K562 (cell line): ENCODE measurements at regions of chr13 and their contacts with region 1.

Region 1: DNA sequence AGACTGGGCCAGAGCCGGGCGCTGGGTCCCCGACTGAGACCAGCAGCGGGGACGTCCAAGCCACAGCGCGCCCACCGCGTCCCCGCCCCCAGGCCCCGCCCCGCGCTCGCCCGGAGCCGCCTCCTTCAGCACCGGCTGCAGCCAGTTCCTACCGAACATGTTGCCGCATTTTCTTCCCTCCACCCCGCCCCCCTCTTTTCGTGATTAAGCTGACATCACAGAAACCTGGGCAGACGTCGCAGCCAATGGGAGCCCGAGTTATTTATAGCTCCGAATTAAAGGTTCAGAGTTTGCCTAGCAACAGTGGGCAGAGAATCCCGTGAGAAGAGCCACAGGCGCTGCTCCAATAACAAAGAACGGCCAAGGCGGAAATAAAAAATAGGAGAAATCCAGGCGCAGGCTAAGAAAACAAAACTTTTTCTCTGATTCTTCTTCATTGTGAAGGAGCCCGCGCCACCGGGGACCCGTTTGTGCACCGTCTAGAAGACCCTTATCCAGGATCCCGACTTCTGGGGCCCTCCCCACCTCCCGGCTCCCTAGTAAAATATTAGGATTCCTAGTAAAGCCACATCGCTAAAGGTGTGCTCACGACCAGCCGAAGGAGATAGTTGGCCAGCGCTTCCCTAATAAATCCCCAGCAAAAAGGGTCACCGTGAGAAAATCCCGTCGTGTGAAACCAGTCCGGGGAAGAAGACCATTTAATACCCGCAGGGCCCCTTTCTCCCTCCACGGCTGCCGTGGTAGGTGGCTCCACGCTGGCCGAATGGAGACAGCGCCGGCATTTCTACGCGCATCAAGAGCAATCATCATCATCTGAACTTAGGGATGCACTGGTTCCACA is 61.7 kb downstream of the SERP2 start:
- DNase-seq: peak; percentile 83 to 94 (median 88)
- ATAC-seq: peak; percentile 90
- H3K4me3 ChIP-seq: peak overlapping the region; percentile 55
- H3K27ac ChIP-seq: peak overlapping the region; percentile 90
- H3K4me1 ChIP-seq: peaks cover 7 to 8% of the 10 kb centered on the region in 2 experiments; a peak in 3 of 5 replicates
- H3K27me3 ChIP-seq: no peaks in the 10 kb centered on the region
- CTCF ChIP-seq: no peak
- EP300 ChIP-seq: peak; percentile 37; the same call in 1 of the 2 replicates
- POLR2A ChIP-seq: peak; percentile 43; the same call in 1 of the 2 replicates
- RAD21 ChIP-seq: no peak

Region 2: DNA sequence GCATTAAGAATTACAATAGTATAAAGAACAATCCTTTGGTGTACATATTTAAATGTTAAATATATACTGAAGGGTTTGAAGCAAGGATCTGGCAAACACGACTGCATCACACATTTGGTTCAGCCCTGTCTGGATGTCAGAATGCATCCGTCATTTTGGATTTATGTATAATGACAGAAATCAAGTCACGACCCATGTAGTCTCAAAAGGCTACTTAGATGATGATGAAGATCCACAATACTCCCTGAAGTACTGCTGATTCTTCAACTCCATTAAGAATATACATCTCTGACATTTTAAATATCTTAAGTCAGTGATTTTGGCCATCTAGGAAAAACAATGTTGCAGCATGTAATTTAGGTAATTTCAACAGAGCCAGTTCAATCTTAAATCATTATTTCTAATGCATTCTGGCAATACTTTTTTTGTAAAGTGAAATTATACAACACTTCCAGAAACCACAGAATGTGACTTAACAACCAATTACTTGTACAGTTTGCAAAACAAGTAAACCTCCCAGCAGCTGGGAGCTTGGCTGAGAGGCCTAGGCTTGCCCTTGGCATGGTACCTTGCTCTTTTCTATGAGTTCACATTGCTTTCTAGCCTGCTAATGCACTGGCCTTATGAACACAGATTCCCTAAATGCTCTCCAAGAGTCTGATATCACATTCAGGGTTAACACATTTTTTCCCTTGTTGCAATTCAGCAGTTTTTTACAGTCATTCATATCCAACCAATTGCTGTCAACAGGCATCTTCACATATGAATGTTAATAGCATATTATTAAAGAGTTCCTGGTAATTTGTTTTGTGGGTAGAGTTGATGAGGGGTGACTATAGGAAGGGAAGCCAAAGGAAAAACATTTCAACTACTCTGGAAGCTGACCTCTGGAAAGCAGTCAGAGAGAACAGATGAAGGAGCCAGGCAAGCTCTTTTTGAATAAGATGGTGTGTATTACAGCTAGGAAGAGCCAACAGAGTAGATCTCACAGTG is 823.8 kb before region 1 on chr13:
- CTCF ChIA-PET with region 1: no interaction called
- POLR2A ChIA-PET with region 1: no interaction called
- in situ Hi-C with region 1: no loop called
- intact Hi-C with region 1: no loop called
- DNase-seq: no peak
- ATAC-seq: no peak
- H3K4me3 ChIP-seq: no peak overlapping the region
- H3K27ac ChIP-seq: no peak overlapping the region
- H3K4me1 ChIP-seq: no peaks in the 10 kb centered on the region
- H3K27me3 ChIP-seq: no peaks in the 10 kb centered on the region
- CTCF ChIP-seq: no peak
- EP300 ChIP-seq: no peak
- POLR2A ChIP-seq: no peak
- RAD21 ChIP-seq: no peak

Region 3: DNA sequence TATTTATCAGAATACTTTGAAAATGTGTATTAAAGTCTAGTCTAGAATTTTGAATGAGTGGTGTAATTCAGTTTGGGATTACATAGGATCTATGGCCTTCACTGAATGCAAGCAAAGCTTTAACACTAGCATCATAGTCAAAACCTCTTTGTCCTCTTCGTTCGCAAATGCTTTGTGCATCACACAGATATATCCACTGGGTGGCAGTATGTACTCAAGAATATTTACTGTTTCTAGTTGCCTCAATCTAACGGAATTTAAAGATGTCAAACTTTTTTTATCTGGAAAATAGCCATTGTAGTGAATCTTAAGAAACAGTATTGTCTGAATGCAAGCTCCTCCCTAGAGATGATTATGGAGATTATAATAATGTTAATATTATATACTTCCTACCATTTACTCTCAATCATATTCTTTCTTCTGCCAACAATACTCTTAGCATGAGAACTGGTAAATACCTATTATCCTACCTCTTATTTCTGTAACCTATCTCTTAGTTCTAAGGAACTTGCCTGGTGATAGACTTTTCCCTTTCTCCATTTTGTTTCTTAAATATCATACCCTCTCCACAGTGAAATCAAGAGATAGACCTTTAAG is 529.8 kb before region 1 on chr13:
- CTCF ChIA-PET with region 1: interaction called, 12 read pairs
- POLR2A ChIA-PET with region 1: interaction called, 3 read pairs
- in situ Hi-C with region 1: no loop called
- intact Hi-C with region 1: loop called (anchors 2 kb)
- DNase-seq: peak; percentile 21 to 52 (median 24)
- ATAC-seq: peak; percentile 64; the same call in 2 of the 3 replicates
- H3K4me3 ChIP-seq: no peak overlapping the region
- H3K27ac ChIP-seq: no peak overlapping the region
- H3K4me1 ChIP-seq: no peaks in the 10 kb centered on the region
- H3K27me3 ChIP-seq: no peaks in the 10 kb centered on the region
- CTCF ChIP-seq: peak; percentile 43 to 68 (median 45); a peak in 5 of 6 replicates
- EP300 ChIP-seq: no peak
- POLR2A ChIP-seq: no peak
- RAD21 ChIP-seq: peak; percentile 72 to 81

Region 4: GRCh38 chr13:44191504-44192171 is 243.7 kb before region 1 on chr13:
- CTCF ChIA-PET with region 1: no interaction called
- POLR2A ChIA-PET with region 1: interaction called, 4 read pairs
- in situ Hi-C with region 1: no loop called
- intact Hi-C with region 1: loop called (anchors 1 kb)
- DNase-seq: peak; percentile 31 to 53 (median 44)
- ATAC-seq: peak; percentile 96
- H3K4me3 ChIP-seq: no peak overlapping the region
- H3K27ac ChIP-seq: no peak overlapping the region
- H3K4me1 ChIP-seq: no peaks in the 10 kb centered on the region
- H3K27me3 ChIP-seq: peaks cover 0 to 4% of the 10 kb centered on the region in 2 experiments; a peak in 1 of 5 replicates
- CTCF ChIP-seq: peak; percentile 61 to 69 (median 67)
- EP300 ChIP-seq: no peak
- POLR2A ChIP-seq: no peak
- RAD21 ChIP-seq: peak; percentile 55 to 62

Region 5: DNA sequence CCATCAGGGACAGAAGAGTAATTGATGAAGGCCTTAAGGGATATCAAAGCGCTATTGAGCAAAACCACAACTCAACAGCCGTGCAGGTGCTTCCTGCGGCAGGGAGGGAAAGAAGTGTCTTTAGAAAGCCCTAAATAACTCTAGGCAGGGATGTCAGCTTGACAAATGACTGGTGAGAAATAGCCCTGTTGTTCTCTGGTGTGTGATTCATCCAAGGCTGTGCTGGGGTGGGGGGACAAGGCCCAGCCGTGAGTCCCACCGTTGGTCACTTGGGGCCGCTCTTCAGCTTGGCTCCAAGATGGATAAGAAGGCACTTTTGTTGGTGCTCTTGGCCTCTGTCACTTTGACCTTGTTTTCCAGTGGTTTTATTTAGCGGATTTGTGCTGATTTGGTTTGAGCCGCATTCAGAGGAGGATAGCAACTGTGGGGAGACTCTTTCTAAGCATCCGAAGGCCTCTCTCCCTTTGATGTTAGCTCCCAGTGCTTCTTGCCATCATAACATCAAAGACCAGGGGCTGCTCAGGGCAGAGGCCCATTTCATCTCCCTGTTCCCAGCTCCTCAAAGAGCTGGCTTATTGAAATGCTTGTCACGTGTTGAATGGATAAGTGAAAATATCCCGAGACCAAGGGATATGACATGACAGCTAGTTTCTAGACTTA is 192.0 kb before region 1 on chr13:
- CTCF ChIA-PET with region 1: interaction called, 24 read pairs
- POLR2A ChIA-PET with region 1: interaction called, 4 read pairs
- in situ Hi-C with region 1: loop called (anchors 5 kb)
- intact Hi-C with region 1: loop called (anchors 1 kb)
- DNase-seq: peak; percentile 64 to 82 (median 70)
- ATAC-seq: peak; percentile 99
- H3K4me3 ChIP-seq: no peak overlapping the region
- H3K27ac ChIP-seq: no peak overlapping the region
- H3K4me1 ChIP-seq: peaks cover 0 to 11% of the 10 kb centered on the region in 2 experiments; a peak in 1 of 5 replicates
- H3K27me3 ChIP-seq: peaks cover 0 to 5% of the 10 kb centered on the region in 2 experiments; a peak in 1 of 5 replicates
- CTCF ChIP-seq: peak; percentile 78 to 82 (median 79)
- EP300 ChIP-seq: no peak
- POLR2A ChIP-seq: no peak
- RAD21 ChIP-seq: peak; percentile 89 to 91

Region 6: DNA sequence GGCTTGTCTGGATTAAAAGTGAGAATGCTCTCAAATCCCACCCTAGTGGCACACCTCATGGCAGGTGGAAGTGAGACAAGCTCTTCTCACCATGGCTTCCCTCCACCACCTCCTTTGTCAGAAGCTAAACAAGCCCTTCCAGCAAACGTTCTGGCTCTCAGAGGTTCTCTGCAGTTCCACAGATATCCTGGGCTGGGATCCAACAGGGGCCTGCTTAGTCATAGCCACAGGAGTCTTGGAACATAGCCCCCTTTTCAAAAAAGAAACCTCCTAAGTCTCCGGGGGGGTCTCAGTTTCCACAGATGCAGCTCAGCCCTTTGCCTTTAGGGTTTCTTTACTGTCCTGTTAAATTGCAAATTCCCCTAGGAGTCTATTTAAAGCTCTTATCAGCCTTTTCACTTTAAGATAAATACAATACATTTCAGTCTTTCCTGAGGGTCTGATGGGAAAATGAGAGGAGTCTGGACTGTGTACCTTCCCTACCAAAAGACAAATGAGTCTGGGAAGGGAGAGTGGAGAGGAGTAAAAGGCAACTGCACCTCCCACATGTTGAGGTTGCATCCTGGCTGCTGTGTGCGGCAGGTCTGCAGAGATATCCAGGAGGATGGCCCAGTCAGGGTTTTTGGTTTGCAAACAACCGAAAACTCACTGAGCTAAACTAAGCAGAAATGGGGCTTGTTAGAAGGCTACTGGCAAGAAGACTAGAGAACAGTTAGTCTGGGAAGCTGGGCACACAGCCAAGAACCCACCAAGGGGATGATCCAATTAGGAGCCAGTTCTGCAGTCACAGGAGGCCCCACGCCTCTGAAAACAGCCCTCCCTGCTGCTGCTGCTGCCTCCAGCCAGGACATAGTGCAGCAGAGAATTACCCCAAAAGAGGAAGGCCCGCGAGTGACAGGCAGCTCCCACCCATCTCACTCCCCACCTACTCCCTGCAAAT is 103.2 kb before region 1 on chr13:
- CTCF ChIA-PET with region 1: no interaction called
- POLR2A ChIA-PET with region 1: interaction called, 3 read pairs
- in situ Hi-C with region 1: no loop called
- intact Hi-C with region 1: loop called (anchors 10 kb)
- DNase-seq: peak in 1 of 4 experiments; percentile 12
- ATAC-seq: peak; percentile 29; the same call in 1 of the 3 replicates
- H3K4me3 ChIP-seq: no peak overlapping the region
- H3K27ac ChIP-seq: no peak overlapping the region
- H3K4me1 ChIP-seq: peaks cover 0 to 3% of the 10 kb centered on the region in 2 experiments; a peak in 2 of 5 replicates
- H3K27me3 ChIP-seq: peaks cover 0 to 8% of the 10 kb centered on the region in 2 experiments; a peak in 1 of 5 replicates
- CTCF ChIP-seq: no peak
- EP300 ChIP-seq: no peak
- POLR2A ChIP-seq: no peak
- RAD21 ChIP-seq: no peak

Region 7: DNA sequence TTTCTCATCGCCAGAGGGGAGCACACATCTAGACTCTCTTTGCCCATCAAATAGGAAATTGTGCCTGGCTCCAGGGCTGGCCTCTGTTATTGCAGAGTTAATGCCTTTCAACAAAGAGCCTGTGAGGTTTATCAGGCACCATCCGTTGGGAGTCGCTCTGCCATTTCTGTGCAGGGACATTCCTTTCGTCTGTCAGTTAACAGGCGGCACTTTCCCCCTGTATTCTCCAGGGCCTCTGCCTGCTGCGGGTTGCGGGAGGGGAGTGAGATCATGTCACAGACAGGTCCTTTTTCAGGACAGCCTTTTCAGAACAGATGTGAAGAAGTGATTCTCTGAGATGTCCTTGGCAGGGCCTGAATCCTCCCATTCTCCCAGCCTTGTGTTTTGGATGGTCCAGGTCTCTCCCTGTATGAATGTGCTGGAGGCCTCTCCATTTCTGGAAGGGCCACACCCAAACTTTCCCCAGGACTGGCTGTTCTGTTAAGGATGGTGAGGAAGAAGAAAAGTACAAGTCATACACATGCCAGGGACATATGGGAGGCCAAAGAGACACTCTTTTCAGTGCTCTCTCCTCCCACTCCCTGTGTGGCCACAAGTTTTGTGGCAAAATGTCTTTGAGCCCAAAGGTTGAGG is 46.8 kb before region 1 on chr13:
- CTCF ChIA-PET with region 1: no interaction called
- POLR2A ChIA-PET with region 1: interaction called, 3 read pairs
- in situ Hi-C with region 1: no loop called
- intact Hi-C with region 1: loop called (anchors 1 kb)
- DNase-seq: peak in 3 of 4 experiments; percentile 23 to 73 (median 27)
- ATAC-seq: peak; percentile 65
- H3K4me3 ChIP-seq: no peak overlapping the region
- H3K27ac ChIP-seq: no peak overlapping the region
- H3K4me1 ChIP-seq: peaks cover 24 to 42% of the 10 kb centered on the region in 2 experiments; a peak in 4 of 5 replicates
- H3K27me3 ChIP-seq: no peaks in the 10 kb centered on the region
- CTCF ChIP-seq: peak in 2 of 3 experiments; percentile 15 to 35; a peak in 2 of 6 replicates
- EP300 ChIP-seq: no peak
- POLR2A ChIP-seq: no peak
- RAD21 ChIP-seq: peak; percentile 18 to 55; a peak in 2 of 4 replicates